ENCODE measurements at regions of chr19 and their contacts with region 1.

Region 1: DNA sequence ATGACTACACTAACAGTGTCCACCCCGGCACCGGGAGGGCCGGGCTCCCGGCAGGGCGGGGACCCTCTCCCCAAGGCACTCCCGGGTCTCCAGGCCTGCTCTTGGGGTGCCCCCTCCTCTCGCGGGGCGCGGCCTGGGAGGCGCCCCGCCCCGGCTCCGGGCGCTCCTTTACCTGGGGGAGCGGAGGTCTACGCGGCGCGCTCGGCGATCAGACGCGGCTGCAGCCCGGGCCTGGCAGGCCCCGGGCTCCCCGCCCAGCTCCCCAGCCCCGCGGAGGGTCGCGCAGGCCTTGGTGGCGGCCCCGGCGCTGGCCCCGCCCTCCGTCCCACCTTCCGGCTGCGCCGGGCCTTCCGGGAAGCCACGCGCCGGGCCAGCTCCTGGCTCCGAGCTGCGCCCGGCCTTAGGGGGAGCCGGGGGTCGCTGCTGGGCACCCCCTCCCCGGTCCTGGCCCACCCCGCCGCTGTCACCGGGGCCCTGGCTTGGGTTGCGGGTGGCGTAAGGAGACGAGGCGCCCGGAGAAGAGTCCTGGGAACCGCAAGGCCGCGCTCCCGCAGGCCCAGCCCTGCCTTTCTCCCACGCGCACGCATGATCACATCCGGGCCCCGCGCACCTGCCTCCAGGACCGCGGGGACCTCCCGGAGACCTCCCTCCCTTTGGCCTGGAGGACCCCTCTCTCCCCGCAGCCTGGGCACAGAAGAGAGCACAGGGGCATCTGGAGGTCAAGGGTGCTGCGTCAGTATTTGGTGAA is at the start of gene C19orf12:
- DNase-seq: peak; percentile 75
- ATAC-seq: peak; percentile 69
- H3K4me3 Mint-ChIP-seq: peak within 1 kb of the TSS; percentile 95
- H3K27ac Mint-ChIP-seq: peak within 1 kb of the TSS; percentile 96
- H3K4me1 Mint-ChIP-seq: peaks cover 57% of the 10 kb centered on the region
- H3K27me3 Mint-ChIP-seq: no peaks in the 10 kb centered on the region
- total RNA-seq, gene C19orf12: 38.7 to 41.0 TPM

Region 2: DNA sequence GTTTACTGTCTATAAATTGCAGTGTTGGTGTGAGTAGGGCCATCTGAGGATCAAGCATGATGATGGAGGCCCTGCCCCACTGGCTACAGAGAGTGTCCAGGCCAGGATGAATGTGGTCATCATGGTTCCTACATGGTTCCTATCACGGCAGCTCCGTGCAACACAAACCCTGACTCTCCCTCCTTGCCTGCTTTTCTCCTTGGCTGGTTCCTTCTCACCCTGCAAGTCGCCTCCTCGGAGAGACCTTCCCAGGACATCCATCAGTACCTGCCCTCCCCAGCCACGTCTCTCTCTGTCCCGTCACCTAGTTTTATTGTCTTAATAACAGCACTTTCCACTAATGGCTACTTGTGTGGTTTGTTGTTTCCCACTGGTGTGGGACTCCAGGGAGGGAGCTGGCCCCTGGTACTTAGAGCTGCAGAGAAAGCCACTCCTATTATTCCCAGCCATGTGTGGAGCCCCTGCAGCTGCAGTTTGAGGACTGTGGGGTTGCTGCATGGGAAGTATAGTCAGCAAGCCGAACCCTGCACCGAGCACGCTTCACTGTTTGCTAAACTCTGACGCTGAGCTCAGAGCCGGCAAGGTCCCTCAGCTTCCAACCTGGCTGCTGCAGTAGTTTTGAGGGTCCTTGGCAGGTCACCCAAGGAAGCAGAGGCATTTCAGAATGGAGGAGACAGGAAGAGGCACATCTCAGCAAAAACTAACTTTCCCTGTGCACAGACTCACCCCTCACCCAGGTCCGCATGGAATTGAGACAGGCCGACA is 335.7 kb before region 1 on chr19:
- CTCF ChIA-PET with region 1: no interaction called
- POLR2A ChIA-PET with region 1: no interaction called
- DNase-seq: peak; percentile 7
- ATAC-seq: no peak
- H3K4me3 Mint-ChIP-seq: no peak overlapping the region
- H3K27ac Mint-ChIP-seq: no peak overlapping the region
- H3K4me1 Mint-ChIP-seq: no peaks in the 10 kb centered on the region
- H3K27me3 Mint-ChIP-seq: peaks cover 18% of the 10 kb centered on the region

Region 3: GRCh38 chr19:29665215-29665825 is 49.8 kb before region 1 on chr19 and contains the start of gene PLEKHF1:
- CTCF ChIA-PET with region 1: interaction called, 96 read pairs
- POLR2A ChIA-PET with region 1: interaction called, 36 read pairs
- DNase-seq: peak; percentile 89
- ATAC-seq: peak; percentile 88
- H3K4me3 Mint-ChIP-seq: peak within 1 kb of the TSS; percentile 86
- H3K27ac Mint-ChIP-seq: peak within 1 kb of the TSS; percentile 90
- H3K4me1 Mint-ChIP-seq: peaks cover 68% of the 10 kb centered on the region
- H3K27me3 Mint-ChIP-seq: no peaks in the 10 kb centered on the region
- total RNA-seq, gene PLEKHF1: 46.0 to 47.7 TPM

Region 4: DNA sequence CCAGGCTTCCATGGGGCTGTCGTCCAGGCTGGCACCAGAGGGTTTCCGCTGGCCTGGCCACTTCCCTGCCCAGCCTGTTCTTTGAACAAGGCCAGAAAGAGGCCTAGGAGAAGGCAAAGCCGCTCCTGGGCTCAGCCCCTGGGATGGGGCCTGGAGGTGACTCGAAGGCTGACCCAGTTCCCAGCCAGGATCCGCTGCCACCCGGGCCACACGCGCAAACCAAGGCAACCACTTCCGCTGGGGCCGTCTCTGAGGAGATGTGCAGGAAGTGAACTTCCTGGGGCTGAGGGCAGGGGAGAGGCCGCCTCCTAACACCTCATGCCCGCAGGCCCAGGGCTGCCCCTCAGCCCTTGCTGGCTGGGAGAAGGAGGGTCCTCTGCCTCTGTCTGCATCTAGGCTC is 34.7 kb before region 1 on chr19:
- CTCF ChIA-PET with region 1: interaction called, 7 read pairs
- POLR2A ChIA-PET with region 1: interaction called, 10 read pairs
- DNase-seq: peak; percentile 91
- ATAC-seq: peak; percentile 94
- H3K4me3 Mint-ChIP-seq: peak overlapping the region; percentile 58
- H3K27ac Mint-ChIP-seq: peak overlapping the region; percentile 89
- H3K4me1 Mint-ChIP-seq: peaks cover 79% of the 10 kb centered on the region
- H3K27me3 Mint-ChIP-seq: no peaks in the 10 kb centered on the region

Region 5: GRCh38 chr19:29704562-29705558 is 10.3 kb before region 1 on chr19:
- CTCF ChIA-PET with region 1: interaction called, 62 read pairs
- POLR2A ChIA-PET with region 1: interaction called, 9 read pairs
- DNase-seq: peak; percentile 40
- ATAC-seq: peak; percentile 72
- H3K4me3 Mint-ChIP-seq: peak overlapping the region; percentile 7
- H3K27ac Mint-ChIP-seq: peak overlapping the region; percentile 86
- H3K4me1 Mint-ChIP-seq: peaks cover 49% of the 10 kb centered on the region
- H3K27me3 Mint-ChIP-seq: no peaks in the 10 kb centered on the region

Region 6: GRCh38 chr19:29750001-29750400 is 34.9 kb after region 1 on chr19:
- CTCF ChIA-PET with region 1: no interaction called
- POLR2A ChIA-PET with region 1: no interaction called
- DNase-seq: no peak
- ATAC-seq: no peak
- H3K4me3 Mint-ChIP-seq: no peak overlapping the region
- H3K27ac Mint-ChIP-seq: no peak overlapping the region
- H3K4me1 Mint-ChIP-seq: no peaks in the 10 kb centered on the region
- H3K27me3 Mint-ChIP-seq: no peaks in the 10 kb centered on the region

Region 7: DNA sequence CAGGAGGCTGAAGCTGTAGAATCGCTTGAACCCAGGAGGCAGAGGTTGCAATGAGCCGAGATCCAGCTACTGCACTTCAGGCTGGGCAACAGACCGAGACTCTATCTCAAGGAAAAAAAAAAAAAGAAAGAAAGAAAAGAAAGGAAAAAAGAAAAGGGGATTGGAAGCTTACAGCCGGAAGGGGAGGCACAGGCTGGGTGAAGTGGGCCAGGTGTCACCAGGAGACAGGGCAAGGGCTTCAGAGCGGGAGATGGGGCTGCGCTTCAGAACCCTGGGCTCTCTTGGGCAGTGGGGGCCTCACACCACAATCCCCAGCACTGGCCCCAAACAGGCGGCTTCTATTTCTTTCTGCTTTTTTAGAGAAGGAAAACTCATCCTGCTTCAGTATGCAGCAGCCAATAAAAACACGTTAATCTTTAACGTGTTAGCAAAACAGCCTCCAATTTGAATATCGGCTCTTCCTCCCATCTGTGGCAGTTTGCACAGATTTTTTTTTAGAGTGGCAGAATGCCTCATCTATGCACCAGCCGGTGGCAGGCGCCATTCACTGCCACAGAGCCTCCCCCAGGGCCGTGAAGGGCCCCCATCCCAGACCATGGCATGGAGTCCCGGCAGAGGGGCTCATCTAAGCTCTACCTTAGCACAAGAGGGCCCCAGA is 46.6 kb after region 1 on chr19:
- CTCF ChIA-PET with region 1: interaction called, 10 read pairs
- POLR2A ChIA-PET with region 1: no interaction called
- DNase-seq: no peak
- ATAC-seq: no peak
- H3K4me3 Mint-ChIP-seq: no peak overlapping the region
- H3K27ac Mint-ChIP-seq: no peak overlapping the region
- H3K4me1 Mint-ChIP-seq: no peaks in the 10 kb centered on the region
- H3K27me3 Mint-ChIP-seq: no peaks in the 10 kb centered on the region

Region 8: DNA sequence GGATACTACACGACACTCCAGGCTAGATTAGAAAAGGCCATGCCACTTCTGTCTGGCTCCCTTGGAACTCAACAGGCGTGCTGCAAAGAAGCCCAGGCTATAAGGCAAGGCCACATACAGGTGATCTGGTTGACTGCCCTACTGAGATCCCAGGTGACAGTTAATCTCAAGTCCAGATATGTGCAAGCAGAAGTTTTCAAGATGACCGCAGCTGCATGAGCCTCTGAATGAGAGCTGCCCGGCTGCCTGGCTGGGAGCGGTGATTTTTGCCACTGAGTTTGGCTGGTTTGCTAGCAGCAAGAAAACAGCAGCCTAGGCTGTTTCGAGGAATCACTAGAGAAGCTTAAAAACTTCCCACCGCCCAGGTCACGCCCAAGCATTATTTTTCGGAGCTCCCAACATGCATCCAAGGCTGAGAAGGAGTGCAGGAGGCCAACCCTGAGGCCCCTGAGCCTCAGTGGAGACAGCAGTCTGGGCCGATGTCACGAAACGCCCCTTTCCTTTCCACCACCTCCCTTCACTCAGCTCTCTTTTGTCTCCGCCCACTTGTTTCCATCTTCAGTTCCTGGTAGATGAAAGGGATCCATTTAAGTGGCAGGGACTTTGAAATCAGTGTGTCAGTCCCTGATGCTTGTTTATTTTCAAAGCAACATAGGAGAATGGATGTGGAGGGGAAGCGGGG is 213.0 kb after region 1 on chr19:
- CTCF ChIA-PET with region 1: no interaction called
- POLR2A ChIA-PET with region 1: no interaction called
- DNase-seq: no peak
- ATAC-seq: no peak
- H3K4me3 Mint-ChIP-seq: no peak overlapping the region
- H3K27ac Mint-ChIP-seq: no peak overlapping the region
- H3K4me1 Mint-ChIP-seq: no peaks in the 10 kb centered on the region
- H3K27me3 Mint-ChIP-seq: peaks cover 3% of the 10 kb centered on the region

Measured in activated CD8-positive, alpha-beta T cell treated with anti-CD3 and anti-CD28 coated beads, Interleukin-2, amount 10 ng/mL, durations not matched to agents 7 days and 5 days (primary cell).